Left ventricle myocardium superior (tissue), 1 donor: ENCODE measurements at regions of chr4 and their contacts with region 1.

Region 1: DNA sequence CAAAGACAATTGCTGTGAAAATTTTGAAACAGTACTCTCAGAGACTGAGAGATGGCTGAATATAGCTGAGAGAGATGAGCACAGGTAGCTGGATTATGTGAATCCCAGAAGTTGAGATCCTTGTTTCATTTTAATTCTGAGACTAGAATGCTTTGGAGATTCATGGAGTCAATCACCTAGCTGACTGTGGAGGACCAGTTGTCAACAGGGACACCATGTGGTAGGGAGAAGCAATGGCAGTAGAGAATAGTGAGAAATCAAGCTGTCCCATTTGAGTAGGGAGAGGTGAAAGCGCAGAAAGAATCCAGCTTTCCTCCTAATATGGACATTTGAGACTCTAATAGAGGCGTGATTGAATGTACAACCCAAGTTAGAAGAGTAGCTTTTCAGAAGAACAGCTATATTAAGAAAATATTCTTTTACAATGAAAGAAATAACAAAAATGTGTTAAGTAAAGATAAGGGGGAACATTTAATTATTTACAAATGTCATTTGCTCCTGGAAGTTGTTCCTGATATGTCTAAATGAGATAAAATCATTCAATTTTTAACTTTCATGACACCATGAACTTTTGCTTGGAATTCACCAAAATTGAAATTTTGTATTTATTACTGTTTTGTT is 30.3 kb upstream of the GLRB start:
- DNase-seq: no peak
- ATAC-seq: peak; percentile 84

Region 2: DNA sequence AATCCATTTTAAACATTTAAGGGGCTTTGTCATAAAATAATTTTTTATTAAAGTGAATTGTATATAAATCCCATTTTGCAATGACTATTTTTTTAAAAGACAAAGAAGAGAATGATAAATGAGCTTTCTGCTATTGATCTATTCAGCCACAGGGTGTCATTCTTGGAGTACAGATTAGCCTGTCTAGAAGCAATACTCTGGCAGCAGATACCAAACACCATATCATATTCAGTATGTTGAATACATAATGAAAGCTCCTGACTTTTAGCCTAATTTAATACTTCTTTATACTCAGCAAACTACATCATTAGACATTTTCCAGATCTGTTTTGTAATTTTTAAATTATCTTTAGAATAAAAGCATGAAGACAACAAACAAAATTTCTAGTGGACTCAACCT is 570.3 kb before region 1 on chr4:
- intact Hi-C with region 1: loop called (anchors 10 kb)
- DNase-seq: no peak
- ATAC-seq: peak; percentile 67

Region 3: DNA sequence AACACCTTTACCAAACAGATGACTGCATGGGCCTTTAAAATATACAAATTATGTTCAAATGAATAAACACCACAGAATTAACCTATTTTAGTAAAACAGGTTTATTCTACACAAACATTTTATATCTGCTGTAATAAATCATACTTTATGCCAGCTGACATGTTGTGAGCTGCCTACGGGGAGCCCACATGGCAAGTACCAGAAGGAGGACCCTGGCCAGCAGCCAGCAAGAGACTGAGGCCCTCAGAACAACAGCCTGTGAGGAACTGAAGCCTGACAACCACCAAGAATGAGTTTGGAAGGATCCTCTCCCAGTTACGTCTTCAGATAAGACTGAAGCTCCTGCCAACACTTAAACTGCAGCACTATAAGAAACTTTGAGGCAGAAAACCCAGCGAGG is 451.0 kb before region 1 on chr4:
- intact Hi-C with region 1: loop called (anchors 10 kb)
- DNase-seq: peak; percentile 71
- ATAC-seq: peak; percentile 19

Region 4: DNA sequence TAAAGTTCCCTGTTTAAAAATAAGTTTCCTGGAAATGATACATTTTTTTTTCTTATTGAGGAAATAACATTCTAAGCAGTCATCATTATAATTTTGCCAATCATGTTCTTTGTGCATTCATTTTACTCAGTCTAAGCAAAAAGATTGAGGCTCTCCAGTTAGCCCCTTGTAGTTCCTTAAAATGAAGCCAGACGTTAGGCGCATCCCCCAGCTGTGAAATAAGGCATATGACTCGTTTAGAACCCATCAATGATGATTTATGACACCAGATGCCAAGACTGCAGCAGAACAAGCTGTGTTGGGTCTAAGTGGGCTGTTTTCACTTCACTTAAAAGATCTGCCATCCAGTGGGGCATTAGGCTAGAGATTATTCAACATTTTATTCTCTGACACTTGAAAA is 91.0 kb before region 1 on chr4:
- intact Hi-C with region 1: no loop called
- DNase-seq: no peak
- ATAC-seq: peak; percentile 70